ENCODE measurements at regions of chr14 and their contacts with region 1.

Region 1: GRCh38 chr14:30375296-30375892 is 183.6 kb upstream of the G2E3 start:
- DNase-seq: peak; percentile 68
- H3K4me3 Mint-ChIP-seq: no peak overlapping the region
- H3K27ac Mint-ChIP-seq: no peak overlapping the region
- H3K4me1 Mint-ChIP-seq: no peaks in the 10 kb centered on the region
- H3K27me3 Mint-ChIP-seq: peaks cover 47% of the 10 kb centered on the region
- CTCF ChIP-seq: peak; percentile 82

Region 2: DNA sequence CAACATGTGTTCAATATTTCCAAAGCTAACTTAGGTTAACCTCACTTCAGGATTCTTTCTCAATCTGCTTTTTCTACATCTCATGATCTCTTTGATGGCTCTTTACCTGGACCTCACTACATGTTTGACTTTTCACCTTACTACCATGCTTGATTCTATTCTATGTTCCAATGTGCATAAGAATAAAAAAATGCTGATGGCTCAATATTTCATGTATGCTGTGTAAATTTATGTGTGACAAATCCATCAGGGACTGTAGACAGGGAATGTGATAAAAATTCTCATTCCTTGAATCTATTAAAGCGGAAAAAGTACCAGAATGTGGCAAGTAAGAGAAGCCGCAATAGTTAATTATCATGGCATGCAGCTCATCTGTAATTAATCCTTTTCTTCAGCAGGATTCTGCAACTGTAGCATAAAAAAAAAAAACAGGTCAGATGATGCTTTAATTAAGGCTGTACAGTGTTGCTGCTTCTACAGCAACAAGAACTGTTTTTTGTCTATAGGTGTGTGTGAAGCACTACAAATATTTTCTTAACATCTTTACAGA is 170.9 kb before region 1 on chr14:
- CTCF ChIA-PET with region 1: no interaction called
- POLR2A ChIA-PET with region 1: no interaction called
- intact Hi-C with region 1: no loop called
- DNase-seq: no peak
- H3K4me3 Mint-ChIP-seq: no peak overlapping the region
- H3K27ac Mint-ChIP-seq: no peak overlapping the region
- H3K4me1 Mint-ChIP-seq: no peaks in the 10 kb centered on the region
- H3K27me3 Mint-ChIP-seq: no peaks in the 10 kb centered on the region
- CTCF ChIP-seq: no peak

Region 3: DNA sequence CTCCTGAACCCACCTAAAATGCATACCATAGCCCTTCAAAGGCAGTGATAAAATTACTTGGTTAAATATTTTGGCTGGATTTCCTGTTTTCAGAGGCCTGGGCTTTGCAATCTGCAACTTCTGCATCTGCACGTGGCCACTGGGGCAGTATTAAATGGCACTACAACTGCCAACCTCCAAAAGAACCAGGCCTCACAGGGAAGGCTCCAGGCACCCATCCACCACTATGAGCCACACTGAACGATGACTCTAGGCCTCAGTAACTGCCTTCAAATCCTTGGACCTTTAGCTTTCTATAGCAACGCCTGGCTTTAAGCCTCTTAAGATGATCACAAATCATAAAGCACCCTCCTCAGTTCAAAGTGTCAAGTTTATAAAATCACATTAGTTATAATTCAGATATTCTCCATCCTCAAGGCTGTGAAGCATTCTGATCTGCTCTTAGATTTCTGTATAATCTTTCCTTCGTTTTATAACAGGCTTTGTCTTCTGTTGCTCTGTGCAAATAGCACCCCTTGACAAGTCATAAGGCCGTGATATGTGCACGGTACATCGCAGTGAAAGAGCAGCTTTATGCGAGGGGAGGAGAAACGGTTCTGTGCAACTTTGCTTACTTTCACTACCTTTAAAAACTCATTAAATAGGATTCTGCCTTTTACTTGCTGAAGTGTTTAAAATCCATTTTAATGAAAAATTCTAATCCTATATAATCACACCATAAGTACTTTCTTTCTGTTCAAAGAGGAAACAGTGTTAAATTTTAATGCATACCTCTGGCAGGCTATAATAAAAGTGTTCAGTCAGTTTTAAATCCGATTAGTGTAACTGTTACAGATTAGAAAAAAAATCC is 12.8 kb before region 1 on chr14:
- CTCF ChIA-PET with region 1: interaction called, 13 read pairs
- POLR2A ChIA-PET with region 1: interaction called, 4 read pairs
- intact Hi-C with region 1: no loop called
- DNase-seq: no peak
- H3K4me3 Mint-ChIP-seq: no peak overlapping the region
- H3K27ac Mint-ChIP-seq: no peak overlapping the region
- H3K4me1 Mint-ChIP-seq: no peaks in the 10 kb centered on the region
- H3K27me3 Mint-ChIP-seq: no peaks in the 10 kb centered on the region
- CTCF ChIP-seq: no peak

Region 4: GRCh38 chr14:30385925-30386324 is 10.5 kb after region 1 on chr14:
- CTCF ChIA-PET with region 1: interaction called, 13 read pairs
- POLR2A ChIA-PET with region 1: interaction called, 3 read pairs
- intact Hi-C with region 1: no loop called
- DNase-seq: no peak
- H3K4me3 Mint-ChIP-seq: no peak overlapping the region
- H3K27ac Mint-ChIP-seq: no peak overlapping the region
- H3K4me1 Mint-ChIP-seq: peaks cover 11% of the 10 kb centered on the region
- H3K27me3 Mint-ChIP-seq: peaks cover 64% of the 10 kb centered on the region
- CTCF ChIP-seq: no peak

Region 5: GRCh38 chr14:30427401-30427800 is 52.0 kb after region 1 on chr14:
- CTCF ChIA-PET with region 1: interaction called, 11 read pairs
- POLR2A ChIA-PET with region 1: no interaction called
- intact Hi-C with region 1: no loop called
- DNase-seq: no peak
- H3K4me3 Mint-ChIP-seq: no peak overlapping the region
- H3K27ac Mint-ChIP-seq: no peak overlapping the region
- H3K4me1 Mint-ChIP-seq: no peaks in the 10 kb centered on the region
- H3K27me3 Mint-ChIP-seq: peaks cover 41% of the 10 kb centered on the region
- CTCF ChIP-seq: no peak

Region 6: DNA sequence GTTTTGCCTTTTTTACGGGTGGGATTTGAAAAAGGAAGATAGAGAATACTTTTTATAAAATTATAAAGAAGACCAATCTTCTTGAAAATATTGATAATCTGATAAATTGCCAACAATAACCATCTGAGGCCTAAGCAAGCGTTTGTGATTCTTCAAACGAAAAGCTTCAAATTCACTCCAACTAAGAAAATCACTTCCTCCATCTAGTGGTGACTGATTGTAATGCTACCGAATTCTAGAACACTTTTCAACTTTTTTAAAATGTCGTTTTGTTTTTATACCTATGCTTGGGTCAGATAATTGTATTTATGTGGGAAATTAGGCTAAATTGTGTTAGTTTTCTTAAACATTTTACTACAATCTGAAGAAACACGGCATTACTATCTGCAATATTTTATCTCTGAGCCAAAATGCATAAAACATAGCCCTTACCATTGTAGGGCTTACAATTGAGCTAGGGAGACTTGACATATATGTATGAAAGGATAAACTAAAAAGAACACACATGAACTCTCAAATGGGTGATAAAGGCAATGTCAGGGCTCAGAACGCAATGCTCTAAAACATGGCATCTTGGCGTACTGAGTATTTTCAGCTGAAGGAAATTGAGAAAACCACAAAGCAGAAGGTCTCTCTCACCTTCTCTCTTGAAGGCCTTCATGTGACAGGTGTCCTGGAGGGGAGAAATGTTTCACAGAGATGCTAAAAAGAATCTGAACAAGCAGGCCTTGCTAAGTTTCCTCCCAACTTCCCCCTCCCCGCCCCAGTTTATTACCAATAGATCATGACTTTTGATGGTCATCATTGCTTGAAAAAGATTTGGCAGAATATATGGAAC is 146.7 kb after region 1 on chr14:
- CTCF ChIA-PET with region 1: interaction called, 17 read pairs
- POLR2A ChIA-PET with region 1: no interaction called
- intact Hi-C with region 1: no loop called
- DNase-seq: peak; percentile 61
- H3K4me3 Mint-ChIP-seq: no peak overlapping the region
- H3K27ac Mint-ChIP-seq: no peak overlapping the region
- H3K4me1 Mint-ChIP-seq: no peaks in the 10 kb centered on the region
- H3K27me3 Mint-ChIP-seq: no peaks in the 10 kb centered on the region
- CTCF ChIP-seq: peak; percentile 42

Measured in MCF 10A (cell line).